ENCODE measurements at regions of chr1 and their contacts with region 1.

Region 1: GRCh38 chr1:47710329-47711071 is 272.7 kb downstream of the FOXD2 start:
- DNase-seq: peak; percentile 35 to 78 (median 62)
- ATAC-seq: peak; percentile 71
- H3K4me3 ChIP-seq: peak overlapping the region in 1 of 2 experiments; percentile 33
- H3K4me3 Mint-ChIP-seq: peak overlapping the region; percentile 32
- H3K27ac ChIP-seq: no peak overlapping the region
- H3K27ac Mint-ChIP-seq: no peak overlapping the region
- H3K4me1 ChIP-seq: peaks cover 21% of the 10 kb centered on the region
- H3K4me1 Mint-ChIP-seq: peaks cover 11% of the 10 kb centered on the region
- H3K27me3 ChIP-seq: peaks cover 16 to 42% of the 10 kb centered on the region in 2 experiments
- H3K27me3 Mint-ChIP-seq: peaks cover 67% of the 10 kb centered on the region
- CTCF ChIP-seq: peak; percentile 84

Region 2: GRCh38 chr1:47179017-47179987 is 531.2 kb before region 1 on chr1:
- CTCF ChIA-PET with region 1: interaction called, 5 read pairs
- POLR2A ChIA-PET with region 1: no interaction called
- intact Hi-C with region 1: loop called (anchors 5 kb)
- DNase-seq: peak; percentile 33 to 75 (median 59)
- ATAC-seq: peak; percentile 69
- H3K4me3 ChIP-seq: peak overlapping the region; percentile 18 to 34
- H3K4me3 Mint-ChIP-seq: peak overlapping the region; percentile 72
- H3K27ac ChIP-seq: no peak overlapping the region
- H3K27ac Mint-ChIP-seq: no peak overlapping the region
- H3K4me1 ChIP-seq: peaks cover 7% of the 10 kb centered on the region
- H3K4me1 Mint-ChIP-seq: peaks cover 14% of the 10 kb centered on the region
- H3K27me3 ChIP-seq: peaks cover 0 to 10% of the 10 kb centered on the region in 2 experiments
- H3K27me3 Mint-ChIP-seq: peaks cover 33% of the 10 kb centered on the region
- CTCF ChIP-seq: peak; percentile 79

Region 3: GRCh38 chr1:47388891-47389238 is 321.6 kb before region 1 on chr1:
- CTCF ChIA-PET with region 1: interaction called, 13 read pairs
- POLR2A ChIA-PET with region 1: no interaction called
- intact Hi-C with region 1: loop called in 1 of 2 experiments (anchors 2 kb)
- DNase-seq: peak in 7 of 9 experiments; percentile 3 to 55 (median 25)
- ATAC-seq: no peak
- H3K4me3 ChIP-seq: no peak overlapping the region
- H3K4me3 Mint-ChIP-seq: no peak overlapping the region
- H3K27ac ChIP-seq: no peak overlapping the region
- H3K27ac Mint-ChIP-seq: no peak overlapping the region
- H3K4me1 ChIP-seq: no peaks in the 10 kb centered on the region
- H3K4me1 Mint-ChIP-seq: no peaks in the 10 kb centered on the region
- H3K27me3 ChIP-seq: no peaks in the 10 kb centered on the region
- H3K27me3 Mint-ChIP-seq: peaks cover 2% of the 10 kb centered on the region
- CTCF ChIP-seq: peak; percentile 45

Region 4: GRCh38 chr1:47432071-47433036 is 278.1 kb before region 1 on chr1:
- CTCF ChIA-PET with region 1: interaction called, 50 read pairs
- POLR2A ChIA-PET with region 1: no interaction called
- intact Hi-C with region 1: loop called (anchors 1 to 2 kb)
- DNase-seq: peak; percentile 21 to 73 (median 62)
- ATAC-seq: peak; percentile 30
- H3K4me3 ChIP-seq: peak overlapping the region; percentile 9 to 34
- H3K4me3 Mint-ChIP-seq: peak overlapping the region; percentile 63
- H3K27ac ChIP-seq: no peak overlapping the region
- H3K27ac Mint-ChIP-seq: no peak overlapping the region
- H3K4me1 ChIP-seq: peaks cover 40% of the 10 kb centered on the region
- H3K4me1 Mint-ChIP-seq: peaks cover 40% of the 10 kb centered on the region
- H3K27me3 ChIP-seq: peaks cover 3 to 18% of the 10 kb centered on the region in 2 experiments
- H3K27me3 Mint-ChIP-seq: peaks cover 33% of the 10 kb centered on the region
- CTCF ChIP-seq: peak; percentile 49

Region 5: DNA sequence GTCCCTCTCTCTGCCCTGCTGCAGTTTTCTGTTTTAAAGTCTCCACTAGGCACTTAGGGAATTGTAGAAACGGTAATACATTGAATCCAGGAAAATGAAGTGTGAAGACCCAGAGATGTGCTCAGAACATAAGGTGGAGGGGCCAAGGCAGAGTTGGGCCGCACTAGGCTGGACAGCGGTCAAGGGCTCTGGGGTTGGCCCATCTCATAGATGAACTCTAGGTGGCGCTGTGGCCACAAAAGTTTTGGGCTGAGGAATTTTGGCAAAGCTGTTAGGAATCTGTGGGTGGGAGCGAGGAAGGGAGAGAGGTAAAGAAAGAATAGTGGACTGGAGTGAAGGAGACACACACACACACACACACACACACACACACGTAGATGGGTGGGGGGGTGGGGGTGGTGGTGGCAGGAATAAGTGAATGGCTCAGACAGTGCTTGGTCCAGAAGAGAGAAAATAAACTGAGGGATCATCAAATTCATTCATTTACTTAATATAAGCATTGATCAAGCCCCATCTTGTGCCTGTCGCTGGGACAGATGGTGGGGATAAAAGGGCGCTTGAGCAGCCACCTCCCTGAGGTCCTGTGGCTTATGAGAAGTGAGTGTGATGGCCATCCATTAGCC is 28.2 kb after region 1 on chr1:
- CTCF ChIA-PET with region 1: no interaction called
- POLR2A ChIA-PET with region 1: no interaction called
- intact Hi-C with region 1: no loop called
- DNase-seq: no peak
- ATAC-seq: no peak
- H3K4me3 ChIP-seq: no peak overlapping the region
- H3K4me3 Mint-ChIP-seq: no peak overlapping the region
- H3K27ac ChIP-seq: no peak overlapping the region
- H3K27ac Mint-ChIP-seq: no peak overlapping the region
- H3K4me1 ChIP-seq: no peaks in the 10 kb centered on the region
- H3K4me1 Mint-ChIP-seq: no peaks in the 10 kb centered on the region
- H3K27me3 ChIP-seq: peaks cover 2 to 5% of the 10 kb centered on the region in 2 experiments
- H3K27me3 Mint-ChIP-seq: peaks cover 42% of the 10 kb centered on the region
- CTCF ChIP-seq: no peak

Region 6: DNA sequence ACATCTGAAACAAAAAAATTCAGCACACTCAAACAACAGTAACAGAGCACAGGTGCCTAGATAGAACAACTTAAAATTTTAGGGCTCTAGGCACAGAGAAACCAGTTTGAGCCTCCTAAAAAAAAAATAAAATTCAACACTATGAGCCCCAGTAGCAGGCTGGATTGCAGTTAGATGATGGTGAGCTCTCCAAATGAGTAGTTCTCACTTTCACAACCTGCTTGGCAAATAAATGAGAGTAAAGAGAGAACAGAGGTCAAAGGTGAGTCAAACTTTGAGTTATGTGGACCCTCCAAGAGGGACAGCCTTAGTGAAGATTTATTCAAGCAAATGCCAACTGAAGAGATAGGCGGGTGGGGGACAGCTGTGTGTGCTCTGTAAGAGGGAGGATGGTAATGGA is 1062.6 kb after region 1 on chr1:
- CTCF ChIA-PET with region 1: no interaction called
- POLR2A ChIA-PET with region 1: no interaction called
- intact Hi-C with region 1: no loop called
- DNase-seq: no peak
- ATAC-seq: no peak
- H3K4me3 ChIP-seq: no peak overlapping the region
- H3K4me3 Mint-ChIP-seq: no peak overlapping the region
- H3K27ac ChIP-seq: no peak overlapping the region
- H3K27ac Mint-ChIP-seq: no peak overlapping the region
- H3K4me1 ChIP-seq: peaks cover 15% of the 10 kb centered on the region
- H3K4me1 Mint-ChIP-seq: peaks cover 79% of the 10 kb centered on the region
- H3K27me3 ChIP-seq: no peaks in the 10 kb centered on the region
- H3K27me3 Mint-ChIP-seq: peaks cover 5% of the 10 kb centered on the region
- CTCF ChIP-seq: no peak